ENCODE measurements at regions of chr11 and their contacts with region 1.

Region 1: DNA sequence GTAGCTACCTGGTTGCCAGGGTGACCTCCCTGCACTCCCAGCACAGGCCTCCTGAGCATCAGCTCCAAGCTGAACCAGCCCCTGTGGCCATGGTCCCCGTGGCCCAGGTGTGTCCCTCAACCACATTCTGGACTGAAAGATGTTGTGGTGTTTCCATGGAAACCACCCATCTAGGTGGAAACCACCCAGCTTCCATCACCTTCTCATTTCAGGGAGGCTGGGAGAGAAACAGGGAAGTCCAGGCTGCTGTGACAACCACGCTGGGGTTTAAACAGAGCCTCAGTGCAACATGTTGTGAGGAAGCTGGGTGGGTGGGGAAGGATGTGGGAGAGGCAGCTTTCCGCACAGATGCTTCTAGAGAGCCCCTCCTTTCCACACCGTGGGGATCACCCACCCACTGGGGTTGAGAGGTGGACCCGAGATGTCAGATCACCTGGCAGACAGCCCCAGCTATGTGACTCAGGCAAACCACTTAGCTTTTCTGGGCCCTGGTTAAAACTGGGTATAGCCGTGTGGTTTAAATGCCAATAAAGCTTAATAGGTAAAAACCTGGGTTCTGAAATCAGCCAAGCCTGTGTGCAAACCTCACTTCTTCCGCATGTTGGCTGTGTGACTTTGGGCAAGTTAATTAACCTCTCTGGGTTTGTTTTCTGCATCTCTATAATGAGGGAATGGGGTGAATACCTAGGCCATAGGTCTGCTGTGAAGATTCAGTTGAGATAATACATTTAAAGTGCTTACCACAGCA is 46.4 kb downstream of the CD82 start:
- DNase-seq: peak; percentile 90
- ATAC-seq: peak; percentile 79
- H3K4me3 Mint-ChIP-seq: no peak overlapping the region
- H3K27ac Mint-ChIP-seq: peak overlapping the region; percentile 89
- H3K4me1 Mint-ChIP-seq: peaks cover 68% of the 10 kb centered on the region
- H3K27me3 Mint-ChIP-seq: no peaks in the 10 kb centered on the region
- CTCF ChIP-seq: no peak

Region 2: DNA sequence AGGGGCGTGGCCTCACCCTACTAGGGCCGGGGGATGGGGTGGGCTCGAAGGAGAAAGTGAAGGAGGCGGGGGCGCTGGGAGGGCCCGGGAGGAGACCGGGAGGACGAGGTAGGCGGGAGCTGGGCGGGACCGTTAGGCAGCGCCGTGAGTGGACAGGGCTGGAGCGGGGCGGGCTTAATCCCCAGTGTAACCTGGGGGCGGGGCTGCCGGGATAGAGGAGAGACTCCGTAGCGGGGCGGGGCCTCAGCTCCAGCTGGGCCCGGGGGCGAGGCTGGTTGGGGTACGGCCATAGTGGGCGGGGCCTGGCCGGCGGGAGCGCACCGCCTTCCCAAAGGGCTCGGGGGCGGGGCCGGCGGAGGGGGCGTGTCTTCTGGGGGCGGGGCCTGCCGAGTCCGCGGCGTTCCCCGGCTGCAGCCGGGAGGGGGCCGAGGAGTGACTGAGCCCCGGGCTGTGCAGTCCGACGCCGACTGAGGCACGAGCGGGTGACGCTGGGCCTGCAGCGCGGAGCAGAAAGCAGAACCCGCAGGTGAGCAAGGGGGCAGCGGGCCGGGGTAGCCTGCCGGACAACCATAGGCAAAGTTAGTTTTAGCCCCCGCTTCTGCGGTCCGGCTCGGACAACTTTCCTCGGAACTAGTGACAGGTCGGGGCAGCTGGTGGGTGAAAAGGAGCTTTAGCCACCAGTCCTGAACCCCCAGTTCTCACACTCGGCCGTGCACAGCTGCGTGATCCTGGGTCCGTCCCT is 46.5 kb before region 1 on chr11 and contains the start of gene CD82:
- CTCF ChIA-PET with region 1: interaction called, 307 read pairs
- POLR2A ChIA-PET with region 1: interaction called, 15 read pairs
- intact Hi-C with region 1: loop called (anchors 1 kb)
- DNase-seq: peak; percentile 99
- ATAC-seq: peak; percentile 88
- H3K4me3 Mint-ChIP-seq: peak within 1 kb of the TSS; percentile 82
- H3K27ac Mint-ChIP-seq: peak within 1 kb of the TSS; percentile 92
- H3K4me1 Mint-ChIP-seq: peaks cover 47% of the 10 kb centered on the region
- H3K27me3 Mint-ChIP-seq: no peaks in the 10 kb centered on the region
- CTCF ChIP-seq: peak; percentile 30
- total RNA-seq, gene CD82: 289 to 319 TPM

Region 3: DNA sequence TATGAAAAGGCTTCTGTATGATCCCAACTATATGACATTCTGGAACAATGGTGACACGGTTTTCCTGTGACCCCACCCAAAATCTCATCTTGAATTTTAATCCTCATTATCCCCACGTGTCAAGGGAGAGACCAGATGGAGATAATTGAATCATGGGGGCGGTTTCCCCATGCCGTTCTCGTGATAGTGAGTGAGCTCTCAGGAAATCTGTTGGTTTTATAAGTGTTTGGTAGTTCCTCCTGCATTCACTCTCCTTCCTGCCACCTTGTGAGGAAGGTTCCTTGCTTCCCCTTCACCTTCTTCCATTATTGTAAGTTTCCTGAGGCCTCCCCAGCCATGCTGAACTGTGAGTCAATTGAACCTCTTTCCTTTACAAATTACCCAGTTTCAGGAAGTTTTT is 61.8 kb after region 1 on chr11:
- CTCF ChIA-PET with region 1: no interaction called
- POLR2A ChIA-PET with region 1: no interaction called
- intact Hi-C with region 1: no loop called
- DNase-seq: no peak
- ATAC-seq: no peak
- H3K4me3 Mint-ChIP-seq: no peak overlapping the region
- H3K27ac Mint-ChIP-seq: no peak overlapping the region
- H3K4me1 Mint-ChIP-seq: peaks cover 7% of the 10 kb centered on the region
- H3K27me3 Mint-ChIP-seq: no peaks in the 10 kb centered on the region
- CTCF ChIP-seq: no peak